AG04449 (cell line): ENCODE measurements at regions of chr1 and their contacts with region 1.

Region 1: DNA sequence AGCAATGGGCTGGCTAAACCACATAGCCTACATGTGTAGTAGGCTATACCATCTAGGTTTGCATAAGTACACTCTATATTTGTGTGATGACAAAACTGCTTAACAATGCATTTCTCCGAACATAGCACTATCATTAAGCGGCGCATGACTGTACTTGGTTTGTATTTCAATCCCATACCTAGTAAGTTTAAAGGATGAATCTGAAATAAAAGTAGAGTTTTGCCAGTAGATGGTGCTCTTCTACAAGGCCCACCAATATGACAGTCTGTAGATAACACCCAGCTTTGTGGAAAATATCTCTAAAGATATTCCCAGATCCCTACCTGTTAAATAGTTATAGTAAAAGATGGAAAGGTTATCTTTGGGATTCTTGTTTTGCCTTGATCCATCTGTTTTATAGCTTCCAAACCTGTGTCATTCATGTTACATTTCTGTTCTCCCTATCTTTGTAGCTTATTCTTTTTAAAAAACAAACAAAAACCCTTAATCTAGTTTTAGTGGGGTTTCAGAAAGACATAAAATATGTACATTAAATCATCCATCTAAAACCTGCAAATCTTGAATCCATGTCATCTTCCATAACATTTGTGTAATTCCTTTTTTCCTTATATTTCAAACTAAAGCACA is 33.9 kb upstream of the ASPM start:
- DNase-seq: peak; percentile 59
- H3K4me3 ChIP-seq: no peak overlapping the region
- CTCF ChIP-seq: peak; percentile 49

Region 2: DNA sequence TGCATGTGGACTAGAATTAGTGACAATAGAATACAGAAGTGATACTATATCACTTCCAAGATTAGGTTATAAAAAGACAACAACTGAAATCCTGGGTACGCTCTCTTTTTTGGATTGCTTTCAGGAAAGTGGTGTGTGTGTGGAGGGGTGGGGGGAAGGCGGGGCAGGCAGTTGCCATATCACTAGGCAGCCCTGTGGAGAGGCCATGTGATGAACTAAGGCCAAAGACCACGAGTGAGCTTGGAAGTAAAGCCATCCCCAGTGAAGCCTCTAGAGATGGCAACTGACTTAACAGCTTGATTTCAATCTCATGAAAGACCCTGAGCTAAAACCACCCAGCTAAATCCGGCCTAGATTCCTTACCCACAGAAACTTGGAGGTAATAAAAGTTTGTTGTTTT is 27.7 kb before region 1 on chr1:
- CTCF ChIA-PET with region 1: interaction called, 11 read pairs
- POLR2A ChIA-PET with region 1: no interaction called
- DNase-seq: no peak
- H3K4me3 ChIP-seq: no peak overlapping the region
- CTCF ChIP-seq: no peak

Region 3: GRCh38 chr1:197195100-197195499 is 14.7 kb after region 1 on chr1:
- CTCF ChIA-PET with region 1: interaction called, 44 read pairs
- POLR2A ChIA-PET with region 1: no interaction called
- DNase-seq: no peak
- H3K4me3 ChIP-seq: no peak overlapping the region
- CTCF ChIP-seq: no peak

Region 4: DNA sequence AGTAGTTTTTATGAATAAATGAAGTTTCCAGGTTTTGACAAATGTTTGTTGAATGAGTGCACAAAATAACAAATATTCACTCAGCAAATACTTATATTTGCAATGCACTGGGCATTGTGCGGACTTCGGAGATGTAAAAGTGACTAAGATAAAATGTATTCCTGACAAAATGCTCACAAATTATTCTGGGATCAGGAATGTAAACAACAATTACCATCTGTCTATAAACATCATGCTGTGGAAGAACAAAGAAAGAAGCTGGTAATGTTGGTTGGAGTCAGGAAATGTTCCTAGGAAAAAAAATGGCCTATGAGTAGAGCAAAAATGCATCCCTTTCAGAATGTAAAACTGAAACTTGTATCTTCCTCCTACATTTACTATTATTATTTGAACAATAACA is 156.2 kb after region 1 on chr1:
- CTCF ChIA-PET with region 1: interaction called, 20 read pairs
- POLR2A ChIA-PET with region 1: no interaction called
- DNase-seq: no peak
- H3K4me3 ChIP-seq: no peak overlapping the region
- CTCF ChIP-seq: no peak